RWPE1 (cell line): ENCODE measurements at regions of chr9 and their contacts with region 1.

Region 1: DNA sequence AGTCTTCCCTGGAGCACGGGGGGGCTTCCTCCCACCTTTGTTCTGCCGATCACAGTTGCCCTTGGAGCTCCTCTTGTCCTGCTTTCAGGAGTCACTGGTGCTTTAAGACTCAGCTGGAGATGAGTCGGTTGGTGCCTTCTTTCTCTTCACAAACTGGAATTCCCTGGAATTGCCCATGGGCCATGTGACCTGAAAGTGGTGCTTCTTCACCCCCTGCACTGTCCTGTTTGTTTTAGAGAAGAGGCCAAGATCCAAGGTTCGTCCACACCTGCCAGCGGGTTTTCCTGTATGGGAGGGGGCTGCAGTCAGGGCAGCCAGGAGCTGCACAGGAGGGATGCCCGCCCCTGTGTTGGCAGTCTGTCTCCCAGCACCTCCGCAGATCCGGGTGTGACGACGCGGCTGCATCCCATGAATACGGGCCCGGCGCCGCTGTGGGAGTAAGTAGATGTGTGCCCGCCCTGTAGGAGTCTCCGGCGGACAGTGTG is 9.5 kb upstream of the MRPS2 start:
- DNase-seq: no peak
- H3K27ac ChIP-seq: no peak overlapping the region
- CTCF ChIP-seq: no peak

Region 2: GRCh38 chr9:135480942-135481314 is 10.1 kb before region 1 on chr9:
- CTCF ChIA-PET with region 1: no interaction called
- POLR2A ChIA-PET with region 1: interaction called, 16 read pairs
- DNase-seq: no peak
- H3K27ac ChIP-seq: peak overlapping the region; percentile 73
- CTCF ChIP-seq: no peak